Body of pancreas (tissue), 4 donors: ENCODE measurements at regions of chr3 and their contacts with region 1.

Region 1: GRCh38 chr3:66280304-66280703 is 59.5 kb downstream of the SLC25A26 start:
- DNase-seq: no peak
- ATAC-seq: no peak
- H3K4me3 ChIP-seq: no peak overlapping the region
- H3K27ac ChIP-seq: no peak overlapping the region
- H3K4me1 ChIP-seq: peaks cover 6% of the 10 kb centered on the region
- H3K27me3 ChIP-seq: no peaks in the 10 kb centered on the region
- CTCF ChIP-seq: no peak
- POLR2A ChIP-seq: no peak

Region 2: DNA sequence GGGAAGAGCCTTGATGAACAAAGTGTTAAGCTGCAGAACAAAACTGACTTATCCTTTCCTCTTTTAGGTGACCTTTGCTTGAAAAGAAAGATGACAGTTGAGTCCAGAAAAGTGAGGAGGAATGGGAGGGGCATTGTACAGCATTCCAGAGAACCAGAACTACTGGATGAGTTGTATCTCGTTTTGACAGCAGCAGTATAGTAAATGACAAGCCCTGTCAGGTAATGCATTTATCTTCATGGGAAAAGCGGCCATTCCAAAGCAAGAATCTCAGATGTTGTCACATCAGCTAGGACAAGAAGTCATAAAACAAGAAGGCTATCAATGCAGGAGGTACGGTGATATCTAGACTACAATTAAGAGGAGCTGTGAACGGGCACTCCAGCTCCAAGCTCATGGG is 663.1 kb before region 1 on chr3:
- intact Hi-C with region 1: no loop called
- DNase-seq: no peak
- ATAC-seq: no peak
- H3K4me3 ChIP-seq: no peak overlapping the region
- H3K27ac ChIP-seq: no peak overlapping the region
- H3K4me1 ChIP-seq: no peaks in the 10 kb centered on the region
- H3K27me3 ChIP-seq: no peaks in the 10 kb centered on the region
- CTCF ChIP-seq: no peak
- POLR2A ChIP-seq: no peak

Region 3: GRCh38 chr3:65992106-65992505 is 288.2 kb before region 1 on chr3:
- intact Hi-C with region 1: no loop called
- DNase-seq: no peak
- ATAC-seq: no peak
- H3K4me3 ChIP-seq: no peak overlapping the region
- H3K27ac ChIP-seq: no peak overlapping the region
- H3K4me1 ChIP-seq: peaks cover 22% of the 10 kb centered on the region
- H3K27me3 ChIP-seq: no peaks in the 10 kb centered on the region
- CTCF ChIP-seq: no peak
- POLR2A ChIP-seq: no peak

Region 4: DNA sequence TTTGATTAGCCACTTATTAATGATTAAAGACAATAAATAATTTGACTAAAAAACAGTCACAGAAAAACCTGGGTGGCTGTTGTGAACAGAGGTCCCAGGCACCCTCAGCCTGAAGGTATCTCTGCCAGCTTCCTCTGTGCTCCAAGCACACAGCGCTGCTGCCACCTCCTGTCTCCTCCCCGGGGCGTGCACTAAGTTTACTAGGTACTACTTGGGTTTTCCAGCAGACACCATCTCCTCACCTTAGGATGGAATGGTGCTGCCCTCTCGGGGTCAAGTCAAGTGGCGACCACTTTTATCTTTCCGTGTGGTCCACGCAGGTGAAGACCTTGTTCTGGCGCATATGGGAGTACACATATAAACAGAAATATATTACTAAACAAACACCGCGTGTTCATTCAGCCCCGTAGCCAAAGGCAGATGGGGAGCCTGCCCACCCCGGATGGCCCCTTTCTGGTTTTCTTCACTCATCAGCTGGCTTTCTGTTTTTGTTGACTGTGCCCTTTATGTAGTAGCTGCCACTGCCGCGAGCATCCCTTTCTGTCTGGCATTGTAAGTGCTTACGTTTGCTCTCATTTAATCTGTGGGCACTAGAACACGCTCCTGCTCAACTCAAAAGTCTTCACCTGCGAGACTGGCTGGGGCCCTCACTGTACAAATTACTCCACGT is 92.5 kb after region 1 on chr3:
- intact Hi-C with region 1: loop called (anchors 10 kb)
- DNase-seq: peak; percentile 73 to 80 (median 77)
- ATAC-seq: peak; percentile 74
- H3K4me3 ChIP-seq: no peak overlapping the region
- H3K27ac ChIP-seq: peak overlapping the region in 1 of 4 donors; percentile 10
- H3K4me1 ChIP-seq: peaks cover 53% of the 10 kb centered on the region
- H3K27me3 ChIP-seq: no peaks in the 10 kb centered on the region
- CTCF ChIP-seq: peak in 6 of 7 experiments; percentile 25 to 68 (median 57)
- POLR2A ChIP-seq: no peak